CD8-positive, alpha-beta T cell (primary cell): ENCODE measurements at regions of chr16 and their contacts with region 1.

Region 1: DNA sequence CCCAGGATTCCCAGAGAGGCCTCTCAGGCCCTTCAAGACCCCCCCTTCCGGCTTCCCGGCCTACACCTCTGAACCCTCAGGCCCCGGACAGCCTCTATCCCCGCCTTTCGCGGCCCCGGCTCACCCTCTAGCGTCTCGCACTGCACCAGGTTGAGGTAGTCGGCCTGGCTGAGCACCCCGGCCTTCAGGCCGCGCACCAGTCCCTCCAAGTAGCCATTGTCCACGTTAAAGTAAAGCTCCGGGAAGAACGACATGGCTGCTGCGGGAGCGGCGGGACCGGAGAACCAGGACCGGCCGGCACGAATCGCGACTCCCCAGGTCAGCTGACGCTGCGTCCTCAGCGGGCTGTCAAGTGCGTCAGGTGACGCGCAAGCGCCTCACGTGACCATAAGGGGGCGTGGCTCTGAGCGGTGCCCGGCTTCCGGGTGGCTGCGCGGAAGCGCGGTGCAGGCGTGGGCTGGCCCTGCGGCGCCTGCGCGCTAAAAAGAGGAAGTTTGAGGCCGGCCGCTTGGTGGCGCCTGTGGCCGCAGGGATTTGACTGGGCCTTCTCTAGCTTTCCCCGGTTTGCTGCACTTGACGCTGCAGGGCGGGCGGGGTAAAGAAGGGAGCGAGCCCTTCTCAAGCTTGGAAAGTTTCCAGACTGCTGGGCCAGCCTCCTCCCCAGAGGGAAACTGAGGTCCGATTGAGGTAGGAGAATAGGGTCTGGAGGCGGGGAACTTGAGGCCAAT is at the start of gene ATP6V0D1:
- DNase-seq: peak; percentile 98 to 99 (median 99)
- ATAC-seq: peak; percentile 90
- H3K4me3 ChIP-seq: peak within 1 kb of the TSS; percentile 91 to 100
- H3K4me3 Mint-ChIP-seq: peak within 1 kb of the TSS; percentile 99
- H3K27ac ChIP-seq: peak within 1 kb of the TSS; percentile 96 to 100
- H3K27ac Mint-ChIP-seq: peak within 1 kb of the TSS; percentile 99
- H3K4me1 ChIP-seq: peaks cover 30% of the 10 kb centered on the region
- H3K4me1 Mint-ChIP-seq: peaks cover 49% of the 10 kb centered on the region
- H3K27me3 ChIP-seq: no peaks in the 10 kb centered on the region
- H3K27me3 Mint-ChIP-seq: no peaks in the 10 kb centered on the region
- CTCF ChIP-seq: peak; percentile 87
- total RNA-seq, gene ATP6V0D1: 56.3 to 62.0 TPM

Region 2: DNA sequence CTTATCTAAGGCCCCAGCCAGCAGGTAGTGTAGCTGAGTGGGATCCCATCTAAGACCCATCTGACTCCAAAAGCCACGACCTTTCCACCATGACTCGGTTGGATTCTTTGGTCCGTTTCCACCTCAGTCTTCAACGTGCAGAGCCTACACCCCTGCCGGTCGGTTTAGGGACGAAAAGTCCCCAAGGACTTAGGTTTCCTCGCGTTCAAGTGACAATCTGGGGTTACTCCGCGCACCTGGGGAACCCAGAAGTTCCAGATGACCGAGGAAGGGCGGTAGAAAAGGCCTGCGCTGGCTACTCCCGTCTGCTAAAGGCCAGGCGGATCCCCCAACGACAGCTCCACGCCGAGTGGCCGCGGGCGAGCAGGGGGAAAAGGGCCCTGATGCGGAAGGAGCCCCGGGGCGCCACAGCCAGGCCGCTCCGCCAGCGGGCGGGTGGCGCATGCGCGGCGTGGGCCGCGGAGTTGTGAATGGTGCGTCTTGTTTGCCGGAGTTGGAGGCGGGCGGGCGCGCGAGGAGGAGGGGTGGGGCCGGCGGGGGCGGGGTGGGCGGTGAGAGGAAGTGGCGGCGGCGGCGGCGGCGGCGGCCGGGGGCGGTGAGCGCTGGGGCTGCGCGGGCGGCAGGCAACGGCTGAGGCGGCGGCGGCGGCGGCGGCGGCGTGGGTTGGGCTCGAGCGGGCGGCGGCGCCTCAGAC is 452.3 kb before region 1 on chr16 and contains the start of gene CBFB:
- CTCF ChIA-PET with region 1: no interaction called
- POLR2A ChIA-PET with region 1: no interaction called
- intact Hi-C with region 1: loop called in 1 of 2 experiments (anchors 10 kb)
- DNase-seq: peak; percentile 88 to 98 (median 93)
- ATAC-seq: peak; percentile 83
- H3K4me3 ChIP-seq: peak within 1 kb of the TSS; percentile 74 to 98
- H3K4me3 Mint-ChIP-seq: peak within 1 kb of the TSS; percentile 90
- H3K27ac ChIP-seq: peak within 1 kb of the TSS; percentile 97
- H3K27ac Mint-ChIP-seq: peak within 1 kb of the TSS; percentile 96
- H3K4me1 ChIP-seq: peaks cover 41% of the 10 kb centered on the region
- H3K4me1 Mint-ChIP-seq: peaks cover 42% of the 10 kb centered on the region
- H3K27me3 ChIP-seq: no peaks in the 10 kb centered on the region
- H3K27me3 Mint-ChIP-seq: no peaks in the 10 kb centered on the region
- CTCF ChIP-seq: no peak
- total RNA-seq, gene CBFB: 52.3 to 58.6 TPM

Region 3: DNA sequence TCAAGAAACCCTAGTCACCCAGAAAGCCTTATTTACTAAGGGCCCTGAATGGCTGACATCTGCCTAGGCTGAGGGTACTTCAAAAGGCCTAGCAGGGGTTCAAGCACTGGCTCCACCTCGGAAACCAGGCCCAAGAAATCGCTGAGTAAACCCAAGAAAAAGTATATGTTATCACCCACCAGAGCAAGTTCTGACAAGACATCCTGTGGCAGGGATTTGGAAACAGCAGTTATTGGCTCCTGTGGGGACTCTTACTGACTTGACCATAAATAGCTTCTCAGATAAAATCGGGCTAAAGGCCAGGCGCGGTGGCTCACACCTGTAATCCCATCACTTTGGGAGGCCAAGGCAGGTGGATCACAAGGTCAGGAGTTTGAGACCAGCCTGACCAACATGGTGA is 12.3 kb before region 1 on chr16:
- CTCF ChIA-PET with region 1: interaction called, 11 read pairs
- POLR2A ChIA-PET with region 1: no interaction called
- intact Hi-C with region 1: no loop called
- DNase-seq: no peak
- ATAC-seq: no peak
- H3K4me3 ChIP-seq: no peak overlapping the region
- H3K4me3 Mint-ChIP-seq: no peak overlapping the region
- H3K27ac ChIP-seq: no peak overlapping the region
- H3K27ac Mint-ChIP-seq: no peak overlapping the region
- H3K4me1 ChIP-seq: no peaks in the 10 kb centered on the region
- H3K4me1 Mint-ChIP-seq: peaks cover 53% of the 10 kb centered on the region
- H3K27me3 ChIP-seq: no peaks in the 10 kb centered on the region
- H3K27me3 Mint-ChIP-seq: no peaks in the 10 kb centered on the region
- CTCF ChIP-seq: no peak

Region 4: DNA sequence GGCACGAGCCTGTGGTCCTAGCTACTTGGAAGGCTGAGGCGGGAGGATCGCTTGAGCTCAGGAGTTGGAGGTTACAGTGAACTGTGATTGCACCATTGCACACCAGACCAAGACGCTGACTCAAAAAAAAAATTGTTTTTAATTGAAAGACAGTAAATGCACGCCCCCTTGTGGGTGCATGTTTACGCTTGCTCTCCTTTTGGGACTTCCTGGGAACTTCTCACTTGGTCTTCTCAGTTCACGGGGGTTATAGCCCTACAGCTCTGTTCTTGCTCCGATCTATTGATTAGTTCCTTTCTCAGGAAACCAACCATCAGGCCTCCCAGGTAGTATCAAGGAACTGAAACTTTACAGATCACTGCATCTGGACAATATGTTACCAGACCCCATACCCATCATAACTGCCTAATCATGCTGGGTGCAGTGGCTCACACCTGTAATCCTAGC is 33.4 kb after region 1 on chr16:
- CTCF ChIA-PET with region 1: interaction called, 111 read pairs
- POLR2A ChIA-PET with region 1: interaction called, 19 read pairs
- intact Hi-C with region 1: loop called (anchors 1 kb)
- DNase-seq: peak; percentile 65 to 91 (median 85)
- ATAC-seq: peak; percentile 93
- H3K4me3 ChIP-seq: no peak overlapping the region
- H3K4me3 Mint-ChIP-seq: no peak overlapping the region
- H3K27ac ChIP-seq: no peak overlapping the region
- H3K27ac Mint-ChIP-seq: no peak overlapping the region
- H3K4me1 ChIP-seq: peaks cover 19% of the 10 kb centered on the region
- H3K4me1 Mint-ChIP-seq: peaks cover 28% of the 10 kb centered on the region
- H3K27me3 ChIP-seq: no peaks in the 10 kb centered on the region
- H3K27me3 Mint-ChIP-seq: no peaks in the 10 kb centered on the region
- CTCF ChIP-seq: peak; percentile 77

Region 5: DNA sequence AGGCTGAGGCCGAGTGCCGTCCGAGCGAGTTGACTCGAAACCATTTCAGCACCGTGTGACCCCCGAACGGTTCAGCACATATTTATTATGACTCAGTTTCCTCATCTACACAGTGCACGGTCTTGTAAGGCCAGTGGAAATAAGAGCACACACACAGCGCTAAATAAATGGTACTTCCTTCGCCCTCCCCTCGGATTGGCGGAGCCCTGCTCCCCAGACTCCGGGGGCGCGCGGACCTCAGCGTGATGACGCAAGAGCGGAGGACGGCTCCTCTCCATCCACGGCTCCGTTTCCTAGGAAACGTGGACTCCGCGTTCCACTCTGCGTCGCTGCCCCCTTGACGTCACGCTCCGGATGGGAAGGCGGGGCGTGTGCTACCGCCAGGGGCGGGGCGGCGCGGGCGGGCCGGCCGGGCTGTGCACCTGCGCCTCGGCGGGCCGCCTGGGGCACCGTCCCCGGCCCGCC is 179.6 kb after region 1 on chr16 and contains the start of gene PARD6A:
- CTCF ChIA-PET with region 1: interaction called, 3 read pairs
- POLR2A ChIA-PET with region 1: interaction called, 8 read pairs
- intact Hi-C with region 1: loop called (anchors 1 kb)
- DNase-seq: peak; percentile 89 to 99 (median 95)
- ATAC-seq: peak; percentile 76
- H3K4me3 ChIP-seq: peak within 1 kb of the TSS; percentile 83 to 100
- H3K4me3 Mint-ChIP-seq: peak within 1 kb of the TSS; percentile 94
- H3K27ac ChIP-seq: peak within 1 kb of the TSS; percentile 92 to 100
- H3K27ac Mint-ChIP-seq: peak within 1 kb of the TSS; percentile 93
- H3K4me1 ChIP-seq: peaks cover 20% of the 10 kb centered on the region
- H3K4me1 Mint-ChIP-seq: peaks cover 23% of the 10 kb centered on the region
- H3K27me3 ChIP-seq: no peaks in the 10 kb centered on the region
- H3K27me3 Mint-ChIP-seq: no peaks in the 10 kb centered on the region
- CTCF ChIP-seq: no peak
- total RNA-seq, gene PARD6A: 3.0 to 3.1 TPM

Region 6: DNA sequence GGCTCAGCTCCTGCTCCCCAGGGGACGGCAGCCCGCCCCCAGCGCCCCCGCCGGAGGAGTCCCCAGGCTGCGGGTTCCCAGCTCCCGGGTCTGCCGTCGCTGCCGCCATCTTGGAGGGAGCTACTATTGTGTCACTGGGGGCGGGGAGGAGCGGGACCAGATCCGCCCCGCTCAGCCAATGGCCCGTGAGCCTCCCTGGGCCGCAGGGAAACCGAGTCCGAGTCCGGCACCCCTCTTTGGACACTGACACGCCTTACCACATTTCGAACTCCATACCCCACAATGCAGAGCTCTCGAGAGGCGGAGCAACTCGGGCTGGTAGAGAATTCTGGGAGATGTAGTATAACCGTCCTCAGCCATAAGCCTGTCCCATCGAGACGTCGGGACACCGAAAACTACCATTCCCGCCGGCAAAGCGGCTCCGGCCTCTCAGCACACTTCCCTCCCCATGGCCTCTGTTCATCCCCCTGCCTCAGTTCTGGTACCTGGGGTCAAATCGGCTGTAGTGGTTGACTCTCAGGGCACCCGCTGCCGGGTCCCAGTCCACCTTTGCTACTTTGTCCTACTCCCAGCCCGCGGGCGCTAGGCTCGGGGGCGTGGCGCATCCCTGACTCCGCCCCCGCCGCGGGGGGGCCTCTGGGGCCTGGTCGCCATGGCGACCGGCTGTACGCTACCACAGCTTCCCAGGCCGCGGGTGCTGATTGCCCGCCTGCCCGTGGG is 325.6 kb after region 1 on chr16 and contains the starts of genes RANBP10 and TSNAXIP1:
- CTCF ChIA-PET with region 1: no interaction called
- POLR2A ChIA-PET with region 1: no interaction called
- intact Hi-C with region 1: loop called (anchors 1 kb)
- DNase-seq: peak; percentile 92 to 99 (median 94)
- ATAC-seq: peak; percentile 91
- H3K4me3 ChIP-seq: peak within 1 kb of the TSS; percentile 89 to 96
- H3K4me3 Mint-ChIP-seq: peak within 1 kb of the TSS; percentile 95
- H3K27ac ChIP-seq: peak within 1 kb of the TSS; percentile 77 to 85
- H3K27ac Mint-ChIP-seq: peak within 1 kb of the TSS; percentile 91
- H3K4me1 ChIP-seq: peaks cover 35% of the 10 kb centered on the region
- H3K4me1 Mint-ChIP-seq: peaks cover 44% of the 10 kb centered on the region
- H3K27me3 ChIP-seq: no peaks in the 10 kb centered on the region
- H3K27me3 Mint-ChIP-seq: no peaks in the 10 kb centered on the region
- CTCF ChIP-seq: no peak
- total RNA-seq, gene RANBP10: 14.6 to 14.8 TPM
- total RNA-seq, gene TSNAXIP1: 0.31 to 0.41 TPM